GM12878 (cell line): ENCODE measurements at regions of chr5 and their contacts with region 1.

Region 1: DNA sequence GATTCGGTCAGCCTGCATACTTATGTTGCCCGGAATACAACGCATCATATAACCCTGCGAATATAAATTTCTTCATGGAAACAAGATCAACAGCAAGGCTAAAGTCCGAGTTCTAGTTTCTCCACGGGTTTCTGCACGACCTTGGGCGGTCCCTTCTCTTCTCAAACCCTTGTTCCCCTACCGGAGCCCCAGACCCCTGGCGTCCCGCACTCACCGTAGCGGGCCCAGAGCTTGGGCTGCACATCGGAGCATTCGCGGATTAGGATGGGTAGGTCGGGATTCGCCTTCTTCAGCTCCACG is 438 bp downstream of the NDUFA2 start:
- DNase-seq: no peak
- ATAC-seq: no peak
- H3K4me3 ChIP-seq: peak overlapping the region; percentile 96
- H3K27ac ChIP-seq: peak overlapping the region; percentile 72
- H3K4me1 ChIP-seq: peaks cover 5% of the 10 kb centered on the region
- H3K27me3 ChIP-seq: no peaks in the 10 kb centered on the region
- CTCF ChIP-seq: no peak
- EP300 ChIP-seq: no peak
- POLR2A ChIP-seq: no peak
- RAD21 ChIP-seq: no peak

Region 2: DNA sequence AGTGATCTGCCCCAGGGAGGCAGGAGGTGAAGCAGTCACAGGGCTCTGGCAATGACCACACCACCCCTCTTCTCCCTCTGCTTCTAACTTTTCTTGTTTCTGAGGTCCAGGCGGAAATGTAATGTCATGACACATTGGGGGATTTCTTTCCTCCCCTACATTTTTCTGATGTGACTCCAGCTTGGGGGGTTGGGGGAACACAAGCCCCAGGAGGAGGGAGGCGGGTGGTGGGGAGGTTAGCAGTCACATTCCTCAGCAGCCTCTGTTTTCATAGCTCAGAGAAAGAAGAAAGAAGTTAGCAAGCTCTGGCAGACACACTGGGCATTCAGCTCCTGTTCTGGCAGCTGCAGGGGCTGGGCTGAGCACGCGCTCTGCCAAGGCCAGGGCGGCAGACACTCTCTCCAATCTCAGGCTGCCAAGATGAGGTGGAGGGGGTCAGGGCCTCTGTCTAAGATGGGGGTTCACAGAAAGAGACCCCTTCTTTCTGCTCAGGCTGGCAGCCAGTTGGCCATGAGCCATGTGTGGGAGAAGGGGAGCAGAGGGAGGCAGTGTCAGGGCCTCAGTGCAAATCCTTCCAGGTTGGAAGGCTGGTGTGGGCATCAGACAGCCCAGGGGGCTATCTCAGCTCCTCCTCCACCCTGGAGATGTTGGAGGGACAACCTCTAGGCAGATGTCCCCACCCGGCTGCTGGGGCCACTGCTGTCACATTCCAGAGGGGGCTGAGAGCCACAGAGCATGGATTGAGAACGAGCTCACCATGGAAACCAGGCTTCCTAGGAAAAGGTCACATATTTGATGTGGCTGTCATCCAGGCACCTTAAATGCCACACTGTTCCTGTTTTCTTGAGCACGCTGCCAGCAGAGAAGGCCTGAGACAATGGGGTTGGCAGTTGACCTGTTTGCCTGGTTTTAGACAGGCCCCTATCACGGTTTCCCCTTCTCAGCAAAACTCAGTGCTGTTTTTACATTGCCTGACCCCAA is 324.0 kb before region 1 on chr5:
- CTCF ChIA-PET with region 1: no interaction called
- POLR2A ChIA-PET with region 1: no interaction called
- RAD21 ChIA-PET with region 1: no interaction called
- SMC1A ChIA-PET with region 1: no interaction called
- in situ Hi-C with region 1: no loop called
- intact Hi-C with region 1: no loop called
- DNase-seq: no peak
- ATAC-seq: peak; percentile 58
- H3K4me3 ChIP-seq: no peak overlapping the region
- H3K27ac ChIP-seq: no peak overlapping the region
- H3K4me1 ChIP-seq: no peaks in the 10 kb centered on the region
- H3K27me3 ChIP-seq: no peaks in the 10 kb centered on the region
- CTCF ChIP-seq: no peak
- EP300 ChIP-seq: no peak
- POLR2A ChIP-seq: no peak
- RAD21 ChIP-seq: no peak

Region 3: GRCh38 chr5:140607031-140607430 is 40.0 kb before region 1 on chr5:
- CTCF ChIA-PET with region 1: no interaction called
- POLR2A ChIA-PET with region 1: no interaction called
- RAD21 ChIA-PET with region 1: no interaction called
- SMC1A ChIA-PET with region 1: no interaction called
- in situ Hi-C with region 1: no loop called
- intact Hi-C with region 1: no loop called
- DNase-seq: no peak
- ATAC-seq: no peak
- H3K4me3 ChIP-seq: no peak overlapping the region
- H3K27ac ChIP-seq: no peak overlapping the region
- H3K4me1 ChIP-seq: no peaks in the 10 kb centered on the region
- H3K27me3 ChIP-seq: no peaks in the 10 kb centered on the region
- CTCF ChIP-seq: no peak
- EP300 ChIP-seq: no peak
- POLR2A ChIP-seq: no peak
- RAD21 ChIP-seq: no peak

Region 4: DNA sequence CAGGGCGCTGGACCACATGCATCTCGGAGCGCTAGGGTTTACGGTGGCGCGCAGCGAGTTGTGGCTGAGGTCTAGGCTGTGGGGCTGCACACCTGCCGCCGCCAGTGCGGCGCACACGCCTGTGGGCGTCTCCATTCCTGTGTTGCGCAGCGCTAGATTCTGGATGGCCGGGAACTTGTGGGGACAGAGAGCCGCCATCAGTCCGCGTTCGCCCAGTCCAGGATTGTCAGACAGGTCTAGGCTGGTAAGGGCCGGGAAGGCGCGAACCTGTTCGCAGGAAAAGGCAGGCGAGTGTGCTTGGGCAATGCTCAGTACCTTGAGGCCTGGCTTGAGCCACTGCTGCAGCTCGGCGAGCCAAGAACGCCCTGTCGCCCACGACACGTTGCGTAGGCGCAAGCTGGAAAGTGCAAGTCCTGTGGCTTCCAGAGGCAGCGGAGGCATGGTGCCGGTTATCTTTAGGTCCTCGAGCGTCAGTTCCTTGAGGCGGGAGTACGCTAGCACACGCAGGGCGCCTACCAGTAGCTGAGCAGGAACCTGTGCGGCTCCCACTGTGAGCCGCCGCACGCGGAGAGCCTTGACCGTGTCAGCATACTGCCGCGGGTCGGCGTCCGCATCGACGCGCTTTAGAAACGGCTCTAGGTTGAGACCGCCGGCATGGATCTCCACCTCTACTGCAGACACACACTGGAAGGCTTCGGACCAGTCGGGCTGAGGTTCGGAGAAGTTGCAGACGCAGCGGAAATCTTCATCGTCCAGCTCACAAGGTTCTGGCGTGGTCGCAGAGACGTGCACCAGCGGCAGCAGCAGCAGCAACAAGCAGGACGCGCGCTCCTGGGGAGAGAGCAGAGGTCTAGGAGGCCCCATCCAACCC is 14.6 kb before region 1 on chr5:
- CTCF ChIA-PET with region 1: interaction called, 13 read pairs
- POLR2A ChIA-PET with region 1: interaction called, 3 read pairs
- RAD21 ChIA-PET with region 1: interaction called, 3 read pairs
- SMC1A ChIA-PET with region 1: interaction called, 4 read pairs
- in situ Hi-C with region 1: no loop called
- intact Hi-C with region 1: no loop called
- DNase-seq: no peak
- ATAC-seq: peak; percentile 71
- H3K4me3 ChIP-seq: peak overlapping the region; percentile 58
- H3K27ac ChIP-seq: no peak overlapping the region
- H3K4me1 ChIP-seq: peaks cover 13% of the 10 kb centered on the region
- H3K27me3 ChIP-seq: peaks cover 3 to 4% of the 10 kb centered on the region in 2 experiments; a peak in 2 of 4 replicates
- CTCF ChIP-seq: no peak
- EP300 ChIP-seq: no peak
- POLR2A ChIP-seq: no peak; the same call in 1 of the 2 replicates
- RAD21 ChIP-seq: no peak

Region 5: GRCh38 chr5:140664359-140665119 is 17.5 kb after region 1 on chr5 and contains the start of gene WDR55:
- CTCF ChIA-PET with region 1: interaction called, 4 read pairs
- POLR2A ChIA-PET with region 1: interaction called, 11 read pairs
- RAD21 ChIA-PET with region 1: interaction called, 6 read pairs
- SMC1A ChIA-PET with region 1: interaction called, 12 read pairs
- in situ Hi-C with region 1: no loop called
- intact Hi-C with region 1: no loop called
- DNase-seq: peak; percentile 71
- ATAC-seq: peak; percentile 98
- H3K4me3 ChIP-seq: peak within 1 kb of the TSS; percentile 96
- H3K27ac ChIP-seq: peak within 1 kb of the TSS; percentile 85
- H3K4me1 ChIP-seq: no peaks in the 10 kb centered on the region
- H3K27me3 ChIP-seq: no peaks in the 10 kb centered on the region
- CTCF ChIP-seq: no peak
- EP300 ChIP-seq: peak in 1 of 2 experiments; percentile 3; a peak in 1 of 4 replicates
- POLR2A ChIP-seq: peak; percentile 98
- RAD21 ChIP-seq: no peak
- polyA plus RNA-seq, gene WDR55: 3.4 to 3.7 TPM

Region 6: DNA sequence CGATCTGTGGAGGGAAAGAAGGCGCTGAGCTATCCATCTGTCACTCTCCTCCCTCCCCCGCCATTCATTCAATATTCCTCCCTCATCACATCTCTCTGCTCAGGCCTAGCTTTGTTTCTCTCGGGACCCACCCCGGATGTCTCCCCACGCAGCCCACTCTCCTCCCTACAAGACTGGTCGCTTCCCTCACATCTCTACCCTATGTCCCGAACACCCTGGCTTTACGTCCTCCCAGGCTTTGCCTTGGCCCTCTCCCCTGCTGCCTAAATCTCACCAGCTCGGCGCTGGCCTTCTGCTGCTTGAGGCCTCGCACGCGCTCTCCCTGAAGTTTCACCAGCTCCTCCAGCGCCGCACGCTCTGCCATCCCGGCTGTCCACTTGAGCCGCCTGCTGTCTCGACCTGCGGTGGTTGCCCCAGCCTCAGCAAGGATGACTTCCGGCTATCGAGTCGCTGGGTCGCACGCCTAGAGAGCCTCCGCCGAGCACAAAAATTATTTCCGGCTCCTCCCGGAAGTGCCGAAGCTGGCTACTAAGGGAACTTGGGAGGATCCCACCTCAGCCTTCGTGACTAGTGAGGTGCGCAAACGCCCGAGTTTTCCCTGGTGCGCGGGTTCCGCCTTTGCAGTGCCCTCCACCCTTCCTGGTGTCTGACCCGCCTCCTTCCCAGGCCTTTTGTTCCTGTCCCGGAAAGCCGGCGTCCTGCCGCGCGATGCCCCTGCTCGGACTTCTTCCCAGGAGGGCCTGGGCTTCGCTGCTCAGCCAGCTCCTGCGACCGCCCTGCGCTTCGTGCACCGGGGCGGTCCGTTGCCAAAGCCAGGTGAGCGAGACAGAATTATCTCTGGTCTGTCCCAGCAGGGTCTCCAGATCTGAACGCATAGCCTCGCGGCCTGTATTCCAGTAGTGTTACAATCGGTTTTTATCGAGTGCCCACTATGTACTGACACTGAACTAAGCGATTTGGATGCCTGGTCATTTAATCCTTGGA is 44.2 kb after region 1 on chr5 and contains the starts of genes HARS1 and HARS2:
- CTCF ChIA-PET with region 1: interaction called, 3 read pairs
- POLR2A ChIA-PET with region 1: interaction called, 14 read pairs
- RAD21 ChIA-PET with region 1: interaction called, 8 read pairs
- SMC1A ChIA-PET with region 1: interaction called, 6 read pairs
- in situ Hi-C with region 1: no loop called
- intact Hi-C with region 1: loop called (anchors 1 kb)
- DNase-seq: peak; percentile 77
- ATAC-seq: peak; percentile 96
- H3K4me3 ChIP-seq: peak within 1 kb of the TSS; percentile 89
- H3K27ac ChIP-seq: peak within 1 kb of the TSS; percentile 74
- H3K4me1 ChIP-seq: peaks cover 4% of the 10 kb centered on the region; the same call in 1 of the 2 replicates
- H3K27me3 ChIP-seq: no peaks in the 10 kb centered on the region
- CTCF ChIP-seq: no peak
- EP300 ChIP-seq: no peak
- POLR2A ChIP-seq: peak; percentile 97
- RAD21 ChIP-seq: no peak
- polyA plus RNA-seq, gene HARS1: 12.0 to 17.3 TPM
- polyA plus RNA-seq, gene HARS2: 9.3 to 13.1 TPM

Region 7: DNA sequence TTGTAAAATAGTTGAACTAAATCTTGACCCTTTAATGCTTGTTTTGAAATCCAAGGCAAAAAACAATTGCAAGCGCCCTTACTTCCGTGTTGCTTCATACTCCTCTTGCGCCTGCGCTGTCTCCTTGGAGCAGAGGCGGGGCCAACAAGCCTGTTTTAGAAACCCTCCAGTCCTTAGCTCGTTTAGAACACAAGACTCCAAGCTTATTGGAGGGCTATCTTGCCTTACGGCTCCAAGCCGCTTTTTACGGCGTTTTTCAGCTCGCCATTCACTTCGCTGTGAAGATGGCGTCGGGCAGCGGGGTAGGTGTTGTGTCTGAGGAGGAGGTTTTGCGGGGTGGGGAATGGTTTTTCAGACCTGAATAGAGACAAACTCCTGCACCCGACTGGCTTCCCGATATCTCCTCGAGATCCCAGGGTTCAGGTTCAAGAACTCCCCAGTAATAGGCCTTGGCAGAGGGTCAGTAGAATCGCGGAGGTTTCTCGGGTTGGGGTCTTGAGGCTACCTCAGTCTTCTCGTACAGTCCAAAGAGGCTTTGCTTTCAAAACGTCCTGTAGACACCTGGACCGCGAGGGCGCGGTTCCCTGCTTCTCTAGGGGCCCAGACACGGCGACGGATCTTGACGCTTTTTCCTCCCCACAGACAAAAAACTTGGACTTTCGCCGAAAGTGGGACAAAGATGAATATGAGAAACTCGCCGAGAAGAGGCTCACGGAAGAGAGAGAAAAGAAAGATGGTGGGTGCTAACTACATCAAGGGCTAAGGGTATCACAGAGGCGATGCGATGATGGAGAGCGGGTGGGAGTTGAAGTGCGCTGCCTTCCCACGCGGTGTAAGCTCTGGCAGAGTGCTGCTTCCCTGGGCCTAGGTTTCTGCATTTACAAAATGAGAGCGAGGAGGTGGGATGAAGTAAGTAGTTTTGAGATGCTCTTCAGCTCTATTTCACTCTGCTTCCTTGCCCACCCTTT is 53.5 kb after region 1 on chr5 and contains the start of gene ZMAT2:
- CTCF ChIA-PET with region 1: no interaction called
- POLR2A ChIA-PET with region 1: interaction called, 11 read pairs
- RAD21 ChIA-PET with region 1: interaction called, 6 read pairs
- SMC1A ChIA-PET with region 1: interaction called, 6 read pairs
- in situ Hi-C with region 1: no loop called
- intact Hi-C with region 1: no loop called
- DNase-seq: peak; percentile 96
- ATAC-seq: peak; percentile 100
- H3K4me3 ChIP-seq: peak within 1 kb of the TSS; percentile 92
- H3K27ac ChIP-seq: peak within 1 kb of the TSS; percentile 38; the same call in 1 of the 2 replicates
- H3K4me1 ChIP-seq: peaks cover 7% of the 10 kb centered on the region; the same call in 1 of the 2 replicates
- H3K27me3 ChIP-seq: no peaks in the 10 kb centered on the region
- CTCF ChIP-seq: no peak
- EP300 ChIP-seq: no peak
- POLR2A ChIP-seq: peak; percentile 88
- RAD21 ChIP-seq: no peak
- polyA plus RNA-seq, gene ZMAT2: 41.5 to 41.8 TPM